ENCODE measurements at regions of chr17 and their contacts with region 1.

Region 1: DNA sequence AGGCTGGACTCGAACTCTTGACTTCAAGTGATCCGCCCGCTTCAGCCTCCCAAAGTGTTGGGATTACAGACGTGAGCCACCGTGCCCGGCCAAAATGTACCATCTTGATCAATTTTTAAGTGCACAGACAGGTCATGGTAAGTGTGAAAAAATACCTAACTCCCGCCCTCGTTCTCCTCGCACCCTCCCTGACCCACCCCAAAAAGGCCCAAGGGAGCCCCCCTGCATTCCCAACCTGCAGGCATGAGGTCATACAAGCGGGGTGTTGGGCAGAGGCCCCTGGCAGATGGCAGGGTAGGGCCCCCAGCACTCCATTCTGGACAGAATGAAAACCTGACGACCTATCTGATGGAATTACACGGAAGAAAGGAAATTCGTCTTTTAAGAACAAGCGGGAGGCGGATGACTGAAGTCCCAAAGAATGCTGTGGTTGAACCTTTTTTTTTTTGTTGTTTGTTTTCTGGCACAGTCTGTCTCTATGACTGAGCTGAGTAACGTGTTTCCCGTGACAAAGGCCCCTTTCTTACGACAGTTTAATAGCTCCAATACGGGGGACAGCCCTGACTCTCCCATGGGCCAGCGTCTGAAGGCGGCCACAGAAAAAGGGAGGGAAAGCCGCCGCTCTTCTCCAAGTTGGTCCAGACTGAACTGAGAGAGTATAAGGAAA is 376.4 kb downstream of the SLC39A11 start:
- DNase-seq: peak; percentile 98
- ATAC-seq: peak; percentile 87
- H3K4me3 ChIP-seq: no peak overlapping the region
- H3K27ac ChIP-seq: peak overlapping the region; percentile 60
- H3K4me1 ChIP-seq: peaks cover 3% of the 10 kb centered on the region; the same call in 1 of the 2 replicates
- H3K27me3 ChIP-seq: no peaks in the 10 kb centered on the region
- CTCF ChIP-seq: no peak
- POLR2A ChIP-seq: peak; percentile 71
- RAD21 ChIP-seq: peak; percentile 16

Region 2: GRCh38 chr17:72510397-72511016 is 205.5 kb before region 1 on chr17:
- CTCF ChIA-PET with region 1: no interaction called
- POLR2A ChIA-PET with region 1: no interaction called
- dilution Hi-C with region 1: no loop called
- in situ Hi-C with region 1: no loop called
- intact Hi-C with region 1: no loop called
- DNase-seq: peak; percentile 27
- ATAC-seq: peak; percentile 15; the same call in 1 of the 2 replicates
- H3K4me3 ChIP-seq: no peak overlapping the region
- H3K27ac ChIP-seq: 0 out of 2 replicates have a peak overlapping the region, but pooled peaks have one; percentile 4
- H3K4me1 ChIP-seq: peaks cover 20% of the 10 kb centered on the region
- H3K27me3 ChIP-seq: no peaks in the 10 kb centered on the region
- CTCF ChIP-seq: no peak
- POLR2A ChIP-seq: no peak
- RAD21 ChIP-seq: no peak

Region 3: DNA sequence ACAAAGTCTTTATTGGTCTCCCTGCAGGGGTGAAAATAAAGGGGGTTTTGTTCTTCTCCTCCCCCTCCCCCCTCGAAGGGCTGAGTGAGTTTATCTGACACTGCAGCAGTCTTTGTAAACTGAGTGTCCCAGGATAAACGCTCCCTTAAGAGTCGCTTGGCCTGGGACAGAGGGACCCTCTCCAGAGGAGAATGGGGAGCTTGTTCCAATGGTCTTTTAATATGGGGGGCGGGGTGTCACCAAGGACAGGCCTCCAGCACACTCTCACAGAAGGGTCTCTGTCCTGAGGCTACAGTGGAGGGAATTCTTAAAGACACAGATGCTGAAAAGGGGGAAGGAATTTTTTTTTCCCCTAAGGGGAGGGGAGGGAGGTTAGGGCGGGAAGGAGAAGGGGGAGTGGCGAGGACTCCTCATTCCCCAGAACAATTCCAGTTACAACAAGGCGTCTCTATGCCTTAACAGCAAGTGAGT is 139.7 kb before region 1 on chr17:
- CTCF ChIA-PET with region 1: no interaction called
- POLR2A ChIA-PET with region 1: no interaction called
- dilution Hi-C with region 1: no loop called
- in situ Hi-C with region 1: loop called (anchors 10 kb)
- intact Hi-C with region 1: no loop called
- DNase-seq: no peak
- ATAC-seq: peak; percentile 27
- H3K4me3 ChIP-seq: no peak overlapping the region
- H3K27ac ChIP-seq: no peak overlapping the region
- H3K4me1 ChIP-seq: peaks cover 13% of the 10 kb centered on the region
- H3K27me3 ChIP-seq: no peaks in the 10 kb centered on the region
- CTCF ChIP-seq: no peak
- POLR2A ChIP-seq: no peak
- RAD21 ChIP-seq: no peak

Measured in IMR-90 (cell line).